ENCODE measurements at regions of chr10 and their contacts with region 1.

Region 1: DNA sequence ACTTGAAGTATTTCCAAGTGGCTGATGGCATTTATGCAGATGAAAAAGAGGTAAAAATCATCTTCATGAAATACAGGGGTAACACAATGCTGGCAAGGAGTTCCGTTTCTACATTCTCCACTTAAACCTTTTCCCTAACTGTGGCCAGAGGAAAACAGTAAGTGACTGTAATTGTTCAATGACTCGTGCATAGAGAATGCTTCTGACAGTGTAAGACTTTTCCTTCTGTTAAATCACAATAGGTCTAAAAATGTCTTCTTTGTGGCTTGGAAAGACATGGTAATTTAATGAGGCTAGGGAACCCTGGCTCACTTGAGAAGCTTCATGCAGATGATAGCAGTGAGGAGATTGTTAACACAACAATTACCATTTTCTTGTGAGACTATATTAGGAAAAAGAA is 50.3 kb upstream of the RSU1 start:
- DNase-seq: no peak
- H3K4me3 ChIP-seq: no peak overlapping the region
- H3K27ac ChIP-seq: no peak overlapping the region
- H3K4me1 ChIP-seq: no peaks in the 10 kb centered on the region
- H3K27me3 ChIP-seq: no peaks in the 10 kb centered on the region
- CTCF ChIP-seq: no peak
- POLR2A ChIP-seq: no peak

Region 2: GRCh38 chr10:16883084-16883483 is 15.5 kb after region 1 on chr10:
- intact Hi-C with region 1: loop called (anchors 1 kb)
- DNase-seq: no peak
- H3K4me3 ChIP-seq: no peak overlapping the region
- H3K27ac ChIP-seq: no peak overlapping the region
- H3K4me1 ChIP-seq: no peaks in the 10 kb centered on the region
- H3K27me3 ChIP-seq: no peaks in the 10 kb centered on the region
- CTCF ChIP-seq: no peak
- POLR2A ChIP-seq: no peak

Measured in breast epithelium (tissue), 4 donors.